Gastrocnemius medialis (tissue), 4 donors: ENCODE measurements at regions of chr14 and their contacts with region 1.

Region 1: GRCh38 chr14:20413045-20413799 is at the start of gene TEP1:
- DNase-seq: peak; percentile 83 to 88
- ATAC-seq: peak; percentile 89 to 93
- H3K4me3 ChIP-seq: peak within 1 kb of the TSS; percentile 79 to 91 (median 85)
- H3K27ac ChIP-seq: peak within 1 kb of the TSS; percentile 94 to 97 (median 96)
- H3K4me1 ChIP-seq: peaks cover 25 to 32% of the 10 kb centered on the region in 2 donors
- H3K27me3 ChIP-seq: no peaks in the 10 kb centered on the region
- CTCF ChIP-seq: no peak
- POLR2A ChIP-seq: peak; percentile 75 to 83
- total RNA-seq, gene TEP1: 7.2 to 25.7 (median 12.0) TPM

Region 2: DNA sequence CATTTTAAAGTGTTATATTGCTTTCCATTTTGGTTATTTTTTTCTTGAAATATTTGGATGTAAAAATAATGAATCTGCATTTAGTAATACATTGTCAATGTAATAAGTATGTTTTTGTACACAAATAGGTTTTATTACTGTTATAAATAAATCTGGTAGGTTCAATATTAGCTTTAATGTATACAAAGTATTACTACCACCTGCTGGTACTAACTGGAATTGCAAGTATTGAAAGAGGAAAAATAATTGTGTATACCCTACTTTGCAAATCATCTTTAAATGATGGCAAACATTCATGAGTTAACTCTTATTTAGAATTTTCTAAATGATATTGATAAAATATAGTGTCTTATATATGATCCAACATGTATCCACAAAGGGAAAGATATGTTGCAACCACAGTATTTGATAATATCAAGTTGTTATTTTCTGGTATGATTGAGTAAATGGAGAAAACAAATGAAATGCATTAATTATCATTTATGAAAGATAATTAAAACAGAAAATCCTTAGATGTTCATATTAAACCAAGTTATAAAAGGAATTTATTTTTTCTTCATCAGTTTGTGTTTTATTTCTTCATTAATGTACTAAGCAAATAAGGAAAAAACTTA is 535.1 kb before region 1 on chr14:
- in situ Hi-C with region 1: no loop called
- intact Hi-C with region 1: no loop called
- DNase-seq: no peak
- ATAC-seq: no peak
- H3K4me3 ChIP-seq: no peak overlapping the region
- H3K27ac ChIP-seq: no peak overlapping the region
- H3K4me1 ChIP-seq: no peaks in the 10 kb centered on the region
- H3K27me3 ChIP-seq: no peaks in the 10 kb centered on the region
- CTCF ChIP-seq: peak in 2 of 5 experiments; percentile 26 to 38
- POLR2A ChIP-seq: no peak

Region 3: GRCh38 chr14:20343092-20343861 is 69.9 kb before region 1 on chr14 and contains the start of gene PARP2:
- in situ Hi-C with region 1: loop called in 1 of 4 experiments (anchors 5 kb)
- intact Hi-C with region 1: loop called (anchors 1 kb)
- DNase-seq: peak; percentile 97 to 98
- ATAC-seq: peak; percentile 96 to 97
- H3K4me3 ChIP-seq: peak within 1 kb of the TSS; percentile 74 to 83 (median 78)
- H3K27ac ChIP-seq: peak within 1 kb of the TSS; percentile 88 to 94 (median 92)
- H3K4me1 ChIP-seq: peaks cover 5 to 10% of the 10 kb centered on the region in 2 donors
- H3K27me3 ChIP-seq: no peaks in the 10 kb centered on the region
- CTCF ChIP-seq: no peak
- POLR2A ChIP-seq: peak; percentile 90 to 97
- total RNA-seq, gene PARP2: 5.1 to 15.0 (median 7.0) TPM

Region 4: DNA sequence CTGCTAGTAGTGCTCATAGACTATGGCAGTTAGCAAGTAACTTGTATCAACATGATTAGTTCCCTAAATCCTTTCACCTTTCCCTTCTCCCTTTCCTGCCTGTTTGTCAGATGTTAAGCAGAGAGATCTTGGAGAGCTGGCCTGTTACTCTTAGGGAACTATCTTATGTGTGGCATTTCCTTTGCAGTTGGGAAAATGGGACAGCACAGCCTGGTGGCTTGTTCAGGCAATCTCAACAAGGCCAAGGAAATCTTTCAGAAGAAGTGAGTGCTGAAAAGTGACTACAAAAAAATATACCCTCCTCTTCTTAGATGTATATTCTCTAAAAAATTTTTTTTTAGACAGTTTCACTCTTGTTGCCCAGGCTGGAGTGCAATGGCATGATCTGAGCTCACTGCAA is 62.4 kb before region 1 on chr14:
- in situ Hi-C with region 1: loop called in 1 of 4 experiments (anchors 5 kb)
- intact Hi-C with region 1: no loop called
- DNase-seq: no peak
- ATAC-seq: no peak
- H3K4me3 ChIP-seq: no peak overlapping the region
- H3K27ac ChIP-seq: no peak overlapping the region
- H3K4me1 ChIP-seq: no peaks in the 10 kb centered on the region
- H3K27me3 ChIP-seq: no peaks in the 10 kb centered on the region
- CTCF ChIP-seq: no peak
- POLR2A ChIP-seq: no peak

Region 5: GRCh38 chr14:20434701-20435581 is 21.7 kb after region 1 on chr14:
- in situ Hi-C with region 1: no loop called
- intact Hi-C with region 1: loop called (anchors 1 kb)
- DNase-seq: peak; percentile 77 to 91
- ATAC-seq: peak; percentile 81
- H3K4me3 ChIP-seq: peak overlapping the region; percentile 47 to 67 (median 58)
- H3K27ac ChIP-seq: peak overlapping the region; percentile 88 to 98 (median 92)
- H3K4me1 ChIP-seq: peaks cover 52 to 68% of the 10 kb centered on the region in 2 donors
- H3K27me3 ChIP-seq: no peaks in the 10 kb centered on the region
- CTCF ChIP-seq: no peak
- POLR2A ChIP-seq: peak in 1 of 2 donors; percentile 48

Region 6: DNA sequence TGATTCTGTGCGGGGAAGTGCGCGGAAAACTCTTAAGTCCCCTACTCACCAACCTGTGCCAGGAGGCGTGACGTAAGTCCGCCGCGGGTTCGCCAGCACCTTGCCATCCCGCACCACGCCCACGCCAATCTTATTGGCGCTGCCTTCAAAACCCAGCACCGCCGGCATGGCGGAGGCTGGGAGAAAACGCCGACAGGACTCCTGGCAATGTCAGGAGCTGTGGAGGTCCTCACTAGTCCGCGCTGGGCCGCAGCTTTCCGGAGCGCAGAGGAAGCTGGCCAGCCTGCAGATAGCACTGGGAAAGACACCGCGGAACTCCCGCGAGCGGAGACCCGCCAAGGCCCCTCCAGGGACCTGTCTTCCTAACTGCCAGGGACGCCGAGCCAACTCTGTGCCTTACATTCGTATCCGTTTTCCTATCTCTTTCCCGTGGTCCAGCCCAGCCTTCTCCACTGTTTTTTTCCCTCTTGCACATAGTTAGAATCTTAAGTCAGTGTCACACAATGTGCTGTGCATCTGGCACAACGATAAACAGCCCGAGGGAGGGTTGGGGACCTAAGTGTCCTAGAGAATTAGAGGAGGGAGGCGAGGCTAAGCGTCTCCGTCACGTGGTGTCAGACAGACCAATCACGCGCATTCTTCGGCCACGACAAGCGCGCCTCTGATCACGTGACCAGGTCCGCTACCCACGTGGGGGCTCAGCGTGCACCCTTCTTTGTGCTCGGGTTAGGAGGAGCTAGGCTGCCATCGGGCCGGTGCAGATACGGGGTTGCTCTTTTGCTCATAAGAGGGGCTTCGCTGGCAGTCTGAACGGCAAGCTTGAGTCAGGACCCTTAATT is 41.5 kb after region 1 on chr14 and contains the starts of genes APEX1 and OSGEP:
- in situ Hi-C with region 1: no loop called
- intact Hi-C with region 1: loop called (anchors 1 kb)
- DNase-seq: peak; percentile 99
- ATAC-seq: peak; percentile 95 to 96
- H3K4me3 ChIP-seq: peak within 1 kb of the TSS; percentile 81 to 88 (median 87)
- H3K27ac ChIP-seq: peak within 1 kb of the TSS; percentile 86 to 98 (median 98)
- H3K4me1 ChIP-seq: peaks cover 23 to 29% of the 10 kb centered on the region in 2 donors
- H3K27me3 ChIP-seq: no peaks in the 10 kb centered on the region
- CTCF ChIP-seq: peak in 3 of 5 experiments; percentile 20 to 51 (median 51)
- POLR2A ChIP-seq: peak; percentile 91 to 95
- total RNA-seq, gene APEX1: 65.6 to 132 (median 94.2) TPM
- total RNA-seq, gene OSGEP: 15.8 to 21.7 (median 20.5) TPM

Region 7: GRCh38 chr14:20461274-20462001 is 48.2 kb after region 1 on chr14 and contains the start of gene PIP4P1:
- in situ Hi-C with region 1: loop called in 1 of 4 experiments (anchors 10 kb)
- intact Hi-C with region 1: no loop called
- DNase-seq: peak; percentile 100
- ATAC-seq: peak; percentile 96 to 97
- H3K4me3 ChIP-seq: peak within 1 kb of the TSS; percentile 93 to 99 (median 96)
- H3K27ac ChIP-seq: peak within 1 kb of the TSS; percentile 98 to 99 (median 98)
- H3K4me1 ChIP-seq: peaks cover 15 to 16% of the 10 kb centered on the region in 2 donors
- H3K27me3 ChIP-seq: no peaks in the 10 kb centered on the region
- CTCF ChIP-seq: peak in 2 of 5 experiments; percentile 20 to 39
- POLR2A ChIP-seq: peak; percentile 97 to 99
- total RNA-seq, gene PIP4P1: 18.8 to 38.5 (median 21.7) TPM

Region 8: DNA sequence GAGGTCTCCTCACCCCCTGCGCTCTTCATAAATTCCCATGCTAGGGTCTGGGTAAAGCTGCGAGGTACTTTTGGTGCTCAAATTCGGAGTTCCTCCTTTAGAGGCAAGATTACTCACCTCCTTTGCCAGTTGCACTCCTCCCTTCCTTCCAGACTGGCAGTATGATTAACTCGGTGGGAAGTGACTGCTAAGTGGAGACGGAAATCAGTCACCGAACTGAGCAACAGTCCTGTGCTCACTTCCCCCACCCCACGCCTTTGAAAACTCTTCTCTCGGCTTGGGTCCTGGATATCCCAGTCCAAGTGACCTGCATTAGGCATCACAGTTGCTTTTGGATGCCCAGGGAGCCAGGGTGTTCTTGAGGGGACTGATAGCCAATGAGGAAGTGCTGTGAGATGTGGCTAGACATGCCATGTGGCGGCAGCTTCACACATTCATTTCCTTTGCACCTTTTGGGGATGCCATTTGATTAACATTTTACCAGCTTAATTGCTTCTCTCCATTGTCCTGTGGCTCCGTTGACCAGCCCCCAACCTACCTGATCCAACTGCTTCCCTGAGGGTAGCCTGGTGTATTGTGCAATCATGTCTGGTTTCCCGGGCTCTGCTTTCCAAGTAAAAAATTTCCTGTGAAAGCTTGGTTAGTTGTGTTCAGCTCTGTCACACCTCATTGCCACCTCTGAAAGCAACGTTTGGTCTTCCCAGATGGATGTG is 56.8 kb after region 1 on chr14:
- in situ Hi-C with region 1: loop called in 1 of 4 experiments (anchors 10 kb)
- intact Hi-C with region 1: loop called (anchors 2 kb)
- DNase-seq: no peak
- ATAC-seq: peak; percentile 67 to 68
- H3K4me3 ChIP-seq: peak overlapping the region; percentile 65 to 95 (median 69)
- H3K27ac ChIP-seq: peak overlapping the region; percentile 74 to 80 (median 76)
- H3K4me1 ChIP-seq: peaks cover 7 to 17% of the 10 kb centered on the region in 2 donors
- H3K27me3 ChIP-seq: no peaks in the 10 kb centered on the region
- CTCF ChIP-seq: no peak
- POLR2A ChIP-seq: no peak